Naive thymus-derived CD4-positive, alpha-beta T cell (primary cell): ENCODE measurements at regions of chr14 and their contacts with region 1.

Region 1: GRCh38 chr14:76647697-76648298 is 113.5 kb upstream of the VASH1 start:
- DNase-seq: peak in 5 of 9 donors; percentile 3 to 25 (median 16)
- ATAC-seq: peak; percentile 57
- H3K4me3 ChIP-seq: no peak overlapping the region
- H3K4me3 Mint-ChIP-seq: no peak overlapping the region
- H3K27ac ChIP-seq: no peak overlapping the region
- H3K27ac Mint-ChIP-seq: no peak overlapping the region
- H3K4me1 ChIP-seq: no peaks in the 10 kb centered on the region
- H3K4me1 Mint-ChIP-seq: no peaks in the 10 kb centered on the region
- H3K27me3 ChIP-seq: no peaks in the 10 kb centered on the region
- H3K27me3 Mint-ChIP-seq: peaks cover 6 to 17% (median 11%) of the 10 kb centered on the region in 5 donors

Region 2: GRCh38 chr14:76456200-76456599 is 191.6 kb before region 1 on chr14:
- CTCF ChIA-PET with region 1: no interaction called
- POLR2A ChIA-PET with region 1: no interaction called
- intact Hi-C with region 1: loop called in 1 of 2 experiments (anchors 5 kb)
- DNase-seq: peak in 4 of 9 donors; percentile 0 to 29 (median 10)
- ATAC-seq: peak; percentile 50
- H3K4me3 ChIP-seq: no peak overlapping the region
- H3K4me3 Mint-ChIP-seq: no peak overlapping the region
- H3K27ac ChIP-seq: no peak overlapping the region
- H3K27ac Mint-ChIP-seq: no peak overlapping the region
- H3K4me1 ChIP-seq: no peaks in the 10 kb centered on the region
- H3K4me1 Mint-ChIP-seq: no peaks in the 10 kb centered on the region
- H3K27me3 ChIP-seq: no peaks in the 10 kb centered on the region
- H3K27me3 Mint-ChIP-seq: peaks cover 3 to 30% (median 13%) of the 10 kb centered on the region in 5 donors